Activated CD8-positive, alpha-beta memory T cell treated with anti-CD3 and anti-CD28 coated beads, Interleukin-2, amount 10 ng/mL, durations not matched to agents 7 days and 5 days (primary cell): ENCODE measurements at regions of chr1 and their contacts with region 1.

Region 1: GRCh38 chr1:23098463-23099170 is 70.0 kb downstream of the LUZP1 start:
- DNase-seq: peak; percentile 75
- ATAC-seq: peak; percentile 46
- H3K4me3 Mint-ChIP-seq: no peak overlapping the region
- H3K27ac Mint-ChIP-seq: no peak overlapping the region
- H3K4me1 Mint-ChIP-seq: peaks cover 45% of the 10 kb centered on the region
- H3K27me3 Mint-ChIP-seq: no peaks in the 10 kb centered on the region

Region 2: DNA sequence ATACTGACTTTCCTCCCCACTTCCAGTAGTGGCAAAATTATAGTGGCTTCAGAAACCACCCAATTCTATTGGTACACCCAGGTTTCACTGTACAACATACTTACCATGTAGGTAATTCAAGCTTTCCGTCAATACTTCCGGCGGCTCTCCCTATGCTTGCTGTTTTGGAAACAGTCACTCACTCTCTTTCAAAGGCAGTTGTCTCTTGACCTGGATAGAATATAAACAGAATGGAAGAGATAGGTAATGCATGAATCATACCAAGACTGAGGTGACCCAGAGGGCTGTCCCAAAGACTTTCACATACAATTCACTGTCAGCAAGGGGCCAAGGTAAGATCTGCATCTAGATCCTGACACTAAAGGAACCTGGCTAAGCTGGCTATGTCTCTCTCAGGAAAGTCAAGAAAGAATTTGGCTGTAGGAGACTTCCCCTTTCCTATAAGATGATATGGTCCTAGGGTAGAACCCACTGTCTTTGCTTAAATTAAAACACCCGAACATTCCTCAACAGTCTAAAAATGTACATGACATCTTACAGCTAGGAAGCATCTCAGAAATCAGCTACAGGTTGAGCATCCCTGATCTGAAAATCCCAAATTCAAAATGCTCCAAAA is 10.4 kb after region 1 on chr1:
- CTCF ChIA-PET with region 1: interaction called, 36 read pairs
- DNase-seq: no peak
- ATAC-seq: no peak
- H3K4me3 Mint-ChIP-seq: no peak overlapping the region
- H3K27ac Mint-ChIP-seq: no peak overlapping the region
- H3K4me1 Mint-ChIP-seq: peaks cover 51% of the 10 kb centered on the region
- H3K27me3 Mint-ChIP-seq: no peaks in the 10 kb centered on the region

Region 3: DNA sequence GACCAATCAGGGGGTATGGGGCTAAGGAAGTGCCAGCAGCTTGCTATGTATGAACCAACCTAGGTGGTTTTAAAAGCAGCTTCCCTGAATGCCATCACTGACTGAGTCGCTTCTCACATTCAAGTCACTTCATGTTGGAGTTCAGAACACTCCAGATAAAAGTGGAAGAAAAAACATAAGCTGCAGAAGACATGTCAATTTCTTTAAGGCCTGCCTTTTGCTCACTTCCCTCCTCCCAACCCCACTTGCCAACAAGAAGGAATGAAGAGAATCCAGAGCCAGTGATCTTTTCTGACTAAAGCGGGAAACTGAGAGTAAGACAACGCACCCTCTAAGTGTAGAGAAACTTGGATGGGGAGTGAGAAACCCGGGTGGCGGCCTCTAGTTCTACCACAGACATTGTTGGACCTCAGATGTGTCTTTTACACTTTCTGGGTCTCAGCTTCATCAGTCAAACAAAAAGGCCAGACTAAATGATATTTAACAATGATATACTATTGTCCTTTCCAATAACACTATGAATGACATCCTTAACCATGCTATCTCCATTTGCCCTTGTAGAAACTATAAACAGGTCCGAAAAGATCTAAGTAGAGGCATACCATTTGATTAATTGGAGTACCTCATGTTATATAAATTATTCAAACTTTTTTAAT is 15.9 kb after region 1 on chr1:
- CTCF ChIA-PET with region 1: interaction called, 36 read pairs
- DNase-seq: no peak
- ATAC-seq: no peak
- H3K4me3 Mint-ChIP-seq: no peak overlapping the region
- H3K27ac Mint-ChIP-seq: no peak overlapping the region
- H3K4me1 Mint-ChIP-seq: peaks cover 78% of the 10 kb centered on the region
- H3K27me3 Mint-ChIP-seq: no peaks in the 10 kb centered on the region

Region 4: DNA sequence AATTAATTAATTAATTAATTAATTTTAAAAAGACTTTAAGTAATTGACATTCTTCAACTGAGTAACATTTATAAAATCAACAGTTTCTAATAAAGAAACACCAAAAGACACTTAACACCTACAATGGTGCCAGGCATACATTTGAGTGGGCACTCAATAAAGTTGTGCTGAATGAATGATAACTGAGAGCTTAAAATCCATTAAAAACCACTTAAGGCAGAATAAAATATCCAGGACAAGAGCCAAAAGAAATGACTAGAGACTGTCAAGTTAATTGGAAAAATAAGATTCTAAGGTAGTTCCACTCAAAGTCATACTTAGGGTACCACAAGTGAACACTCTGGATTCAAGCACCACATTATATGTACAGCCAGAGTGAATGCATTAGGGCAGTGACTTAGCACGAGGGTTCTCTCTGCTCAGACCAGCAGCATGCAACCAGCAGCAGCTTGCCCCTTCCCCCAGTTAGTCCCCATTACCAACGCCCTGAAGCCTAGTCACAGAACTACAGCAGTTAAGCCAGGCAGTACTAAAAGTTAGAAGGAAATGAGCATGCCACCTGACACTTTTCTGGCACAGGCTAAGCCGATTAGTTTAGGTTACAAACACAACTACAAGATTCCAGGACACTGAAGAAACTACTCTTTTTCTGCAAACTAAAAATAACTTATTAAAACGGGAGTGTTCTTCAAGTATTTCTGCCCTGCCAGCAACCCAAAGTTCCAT is 23.6 kb after region 1 on chr1:
- CTCF ChIA-PET with region 1: interaction called, 22 read pairs
- DNase-seq: no peak
- ATAC-seq: no peak
- H3K4me3 Mint-ChIP-seq: no peak overlapping the region
- H3K27ac Mint-ChIP-seq: no peak overlapping the region
- H3K4me1 Mint-ChIP-seq: peaks cover 44% of the 10 kb centered on the region
- H3K27me3 Mint-ChIP-seq: no peaks in the 10 kb centered on the region

Region 5: DNA sequence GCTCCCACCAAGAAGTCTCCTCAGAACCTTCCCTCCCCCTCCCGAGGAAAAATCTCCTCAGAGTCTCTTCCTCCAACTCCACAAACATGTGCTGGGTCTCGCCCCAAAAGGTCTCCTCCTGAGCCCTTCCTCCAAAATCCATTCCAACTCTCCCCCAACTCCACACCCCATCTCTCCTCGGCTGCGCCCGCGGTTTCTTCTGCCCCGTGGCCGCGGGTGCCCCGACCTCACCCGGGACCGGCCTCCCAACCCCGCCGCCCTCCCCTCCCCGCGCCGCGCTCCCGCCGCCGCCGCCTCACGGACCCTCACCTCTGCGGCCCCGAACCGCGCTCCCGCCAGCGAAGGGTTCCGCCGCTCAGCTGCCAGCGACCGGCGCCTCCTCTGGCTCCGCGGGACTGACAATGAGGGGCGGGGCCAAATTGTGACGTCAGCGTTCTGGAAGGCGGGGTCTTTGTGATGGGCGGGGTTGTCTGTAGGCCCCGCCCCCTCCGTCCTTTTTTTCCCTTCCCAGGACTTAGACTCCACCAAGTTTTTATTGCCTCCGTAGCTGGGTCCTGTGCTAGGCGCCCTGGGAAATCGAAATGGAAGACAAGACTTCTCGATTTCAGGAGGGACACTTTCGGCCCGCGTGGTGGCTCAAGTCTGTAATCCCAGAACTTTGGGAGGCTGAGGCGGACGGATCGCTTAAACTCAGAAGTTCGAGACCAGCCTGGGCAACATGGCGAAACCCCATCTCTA is 70.0 kb after region 1 on chr1 and contains the start of gene LUZP1:
- CTCF ChIA-PET with region 1: interaction called, 515 read pairs
- DNase-seq: peak; percentile 90
- ATAC-seq: peak; percentile 90
- H3K4me3 Mint-ChIP-seq: peak within 1 kb of the TSS; percentile 98
- H3K27ac Mint-ChIP-seq: peak within 1 kb of the TSS; percentile 84
- H3K4me1 Mint-ChIP-seq: peaks cover 14% of the 10 kb centered on the region
- H3K27me3 Mint-ChIP-seq: peaks cover 2% of the 10 kb centered on the region
- total RNA-seq, gene LUZP1: 19.5 to 20.4 TPM

Region 6: DNA sequence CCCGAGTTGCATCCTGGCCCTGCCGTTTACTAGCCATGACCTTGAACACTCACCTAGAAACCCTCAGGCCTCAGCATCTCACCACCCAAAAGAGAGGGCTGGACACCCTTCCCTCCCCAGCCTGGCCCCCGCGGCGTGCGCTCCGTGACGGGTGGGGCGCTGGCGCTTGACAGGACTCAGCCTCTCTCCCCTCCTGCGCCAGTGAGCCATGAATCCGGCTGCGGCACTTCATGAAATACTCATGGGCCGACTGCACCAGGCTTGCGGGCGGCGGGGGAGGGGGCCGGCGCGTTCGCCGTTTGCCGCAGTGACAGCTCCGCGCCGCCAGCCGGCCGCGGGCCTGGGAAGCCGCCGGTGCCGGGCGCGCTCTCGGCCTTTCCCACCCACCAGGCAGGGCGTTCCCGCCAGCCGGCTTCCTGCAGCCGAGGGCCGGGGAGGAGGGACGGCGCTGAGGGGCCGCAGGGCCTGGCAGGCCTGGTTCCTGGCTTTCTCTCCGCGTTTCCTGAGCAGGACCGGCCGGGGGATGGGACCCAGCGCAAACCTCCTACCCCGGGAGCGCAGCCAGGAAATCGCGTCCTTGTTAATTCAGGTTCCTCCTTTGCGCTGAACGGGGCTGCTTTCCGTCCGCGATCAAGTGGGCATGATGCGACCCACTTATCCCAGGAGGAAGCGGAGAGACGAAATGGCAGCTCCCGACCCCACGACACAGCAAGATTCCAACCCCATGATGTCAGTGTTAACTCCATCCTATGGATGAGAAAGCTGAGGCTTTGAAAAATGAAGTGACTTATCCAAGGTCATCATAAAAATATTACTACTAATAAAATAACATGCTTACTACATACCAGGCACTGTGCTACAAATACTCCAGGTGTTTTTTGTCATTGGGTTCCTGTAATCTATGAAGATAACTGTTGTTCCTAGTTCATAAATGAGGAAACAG is 79.1 kb after region 1 on chr1:
- CTCF ChIA-PET with region 1: interaction called, 515 read pairs
- DNase-seq: peak; percentile 51
- ATAC-seq: peak; percentile 78
- H3K4me3 Mint-ChIP-seq: peak overlapping the region; percentile 57
- H3K27ac Mint-ChIP-seq: no peak overlapping the region
- H3K4me1 Mint-ChIP-seq: peaks cover 16% of the 10 kb centered on the region
- H3K27me3 Mint-ChIP-seq: peaks cover 43% of the 10 kb centered on the region